Endothelial cell of umbilical vein (primary cell): ENCODE measurements at regions of chr12 and their contacts with region 1.

Region 1: DNA sequence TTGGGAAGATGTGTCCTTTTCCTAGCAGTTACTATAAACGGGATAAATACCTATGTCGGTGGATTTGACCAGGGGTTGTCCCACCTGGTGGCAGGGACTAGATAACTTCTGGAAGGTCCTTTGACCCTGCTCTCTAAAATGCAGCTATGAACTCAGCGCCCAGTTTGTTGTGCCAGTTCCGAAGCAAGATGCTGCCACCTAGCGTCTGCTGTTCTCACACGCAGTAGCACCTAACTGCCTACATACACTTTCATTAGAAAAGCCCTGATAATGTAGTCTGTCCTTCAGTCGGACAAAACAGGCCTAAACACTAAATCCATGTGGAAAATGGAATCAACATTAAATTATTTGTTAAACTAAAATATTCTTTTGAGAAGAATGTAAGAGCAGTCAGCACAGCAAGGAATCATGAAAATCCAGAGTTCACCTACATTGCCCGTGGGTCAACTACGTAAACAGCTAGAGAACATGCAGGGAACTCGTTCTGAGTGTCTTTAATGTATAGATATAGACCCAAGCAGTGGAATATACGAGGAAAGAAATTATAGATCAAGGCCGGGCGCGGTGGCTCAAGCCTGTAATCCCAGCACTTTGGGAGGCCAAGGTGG is 51.1 kb upstream of the CRACR2A start:
- DNase-seq: peak; percentile 59
- H3K4me3 ChIP-seq: no peak overlapping the region
- H3K27ac ChIP-seq: no peak overlapping the region
- H3K4me1 ChIP-seq: no peaks in the 10 kb centered on the region
- H3K27me3 ChIP-seq: no peaks in the 10 kb centered on the region
- CTCF ChIP-seq: peak; percentile 88 to 90
- POLR2A ChIP-seq: no peak

Region 2: GRCh38 chr12:3313675-3314663 is 490.0 kb before region 1 on chr12:
- CTCF ChIA-PET with region 1: interaction called, 92 read pairs
- POLR2A ChIA-PET with region 1: no interaction called
- dilution Hi-C with region 1: no loop called
- intact Hi-C with region 1: loop called (anchors 1 kb)
- DNase-seq: peak; percentile 20
- H3K4me3 ChIP-seq: no peak overlapping the region
- H3K27ac ChIP-seq: no peak overlapping the region
- H3K4me1 ChIP-seq: peaks cover 4% of the 10 kb centered on the region
- H3K27me3 ChIP-seq: peaks cover 0 to 1% of the 10 kb centered on the region in 2 experiments
- CTCF ChIP-seq: peak; percentile 10 to 62
- POLR2A ChIP-seq: no peak

Region 3: DNA sequence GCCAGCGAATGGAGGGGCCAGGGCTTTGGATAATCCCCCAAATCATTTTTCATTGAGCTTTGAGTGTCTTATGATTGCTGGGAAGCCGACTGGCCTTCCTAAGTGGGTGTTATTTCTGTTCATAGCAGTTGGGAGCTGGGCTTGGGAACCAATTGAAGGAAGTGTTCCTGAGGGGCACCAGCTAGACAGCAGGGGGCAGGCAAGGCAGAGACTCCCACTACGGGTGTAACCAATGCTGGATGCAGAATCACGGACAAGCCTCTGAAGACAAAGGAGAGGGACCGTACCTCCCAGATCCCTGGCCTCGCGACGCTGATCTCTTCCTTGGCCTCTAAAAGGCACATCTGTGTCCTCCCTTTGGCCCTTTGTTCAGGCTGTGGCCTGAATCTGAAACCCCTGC is 461.9 kb before region 1 on chr12:
- CTCF ChIA-PET with region 1: interaction called, 45 read pairs
- POLR2A ChIA-PET with region 1: no interaction called
- dilution Hi-C with region 1: no loop called
- intact Hi-C with region 1: loop called (anchors 1 kb)
- DNase-seq: peak; percentile 37
- H3K4me3 ChIP-seq: no peak overlapping the region
- H3K27ac ChIP-seq: no peak overlapping the region
- H3K4me1 ChIP-seq: no peaks in the 10 kb centered on the region
- H3K27me3 ChIP-seq: no peaks in the 10 kb centered on the region
- CTCF ChIP-seq: peak; percentile 23 to 65
- POLR2A ChIP-seq: no peak

Region 4: DNA sequence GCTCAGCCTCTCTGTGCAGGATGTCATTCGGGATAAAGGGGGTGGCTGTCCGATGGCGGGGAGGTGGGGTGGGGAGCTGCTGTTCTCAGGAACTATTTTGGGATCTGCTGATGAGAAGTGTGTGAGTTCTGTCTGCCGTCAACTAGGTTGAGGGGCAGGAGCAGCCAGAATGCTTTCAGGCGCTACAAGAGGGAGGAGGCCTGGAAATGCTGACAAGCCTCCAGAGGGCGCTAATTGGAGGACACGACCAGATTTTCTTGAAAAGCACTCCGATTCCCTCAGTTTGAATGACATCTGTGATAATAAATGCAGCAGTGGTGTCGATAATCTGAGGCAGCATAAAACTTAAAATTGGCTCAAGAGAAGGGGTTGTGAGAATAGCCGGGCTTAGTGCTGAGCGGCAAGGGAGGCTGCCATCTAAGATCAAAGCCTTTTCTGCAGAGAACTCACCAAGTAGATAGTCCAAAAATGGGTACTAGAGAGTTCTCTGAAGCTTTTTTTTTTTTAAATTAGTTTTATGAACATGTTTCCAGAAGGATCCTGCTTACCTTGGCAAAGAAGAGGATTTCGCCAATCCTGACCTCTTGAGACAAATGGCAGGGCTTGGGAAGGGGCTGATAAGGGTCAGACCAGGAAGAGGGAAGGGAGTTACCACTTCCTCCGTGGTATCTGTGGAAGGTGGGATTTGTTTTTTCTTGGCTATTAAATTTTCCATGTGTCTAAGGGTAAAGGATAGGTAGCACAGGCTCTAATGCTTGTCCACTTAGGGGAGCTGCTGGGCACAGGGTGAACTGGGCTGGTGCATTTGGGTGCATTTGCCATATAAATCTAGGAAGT is 145.4 kb before region 1 on chr12:
- CTCF ChIA-PET with region 1: interaction called, 11 read pairs
- POLR2A ChIA-PET with region 1: no interaction called
- dilution Hi-C with region 1: no loop called
- intact Hi-C with region 1: loop called (anchors 10 kb)
- DNase-seq: peak; percentile 20
- H3K4me3 ChIP-seq: no peak overlapping the region
- H3K27ac ChIP-seq: no peak overlapping the region
- H3K4me1 ChIP-seq: no peaks in the 10 kb centered on the region
- H3K27me3 ChIP-seq: no peaks in the 10 kb centered on the region
- CTCF ChIP-seq: peak; percentile 44 to 68
- POLR2A ChIP-seq: no peak

Region 5: GRCh38 chr12:3680896-3681594 is 122.9 kb before region 1 on chr12:
- CTCF ChIA-PET with region 1: interaction called, 10 read pairs
- POLR2A ChIA-PET with region 1: no interaction called
- dilution Hi-C with region 1: no loop called
- intact Hi-C with region 1: no loop called
- DNase-seq: peak; percentile 61
- H3K4me3 ChIP-seq: no peak overlapping the region
- H3K27ac ChIP-seq: no peak overlapping the region
- H3K4me1 ChIP-seq: no peaks in the 10 kb centered on the region
- H3K27me3 ChIP-seq: no peaks in the 10 kb centered on the region
- CTCF ChIP-seq: peak in 1 of 2 donors; percentile 66
- POLR2A ChIP-seq: no peak